HEK293T (cell line): ENCODE measurements at regions of chr5 and their contacts with region 1.

Region 1: GRCh38 chr5:35926389-35927051 is 11.9 kb downstream of the CAPSL start:
- DNase-seq: peak; percentile 71

Region 2: DNA sequence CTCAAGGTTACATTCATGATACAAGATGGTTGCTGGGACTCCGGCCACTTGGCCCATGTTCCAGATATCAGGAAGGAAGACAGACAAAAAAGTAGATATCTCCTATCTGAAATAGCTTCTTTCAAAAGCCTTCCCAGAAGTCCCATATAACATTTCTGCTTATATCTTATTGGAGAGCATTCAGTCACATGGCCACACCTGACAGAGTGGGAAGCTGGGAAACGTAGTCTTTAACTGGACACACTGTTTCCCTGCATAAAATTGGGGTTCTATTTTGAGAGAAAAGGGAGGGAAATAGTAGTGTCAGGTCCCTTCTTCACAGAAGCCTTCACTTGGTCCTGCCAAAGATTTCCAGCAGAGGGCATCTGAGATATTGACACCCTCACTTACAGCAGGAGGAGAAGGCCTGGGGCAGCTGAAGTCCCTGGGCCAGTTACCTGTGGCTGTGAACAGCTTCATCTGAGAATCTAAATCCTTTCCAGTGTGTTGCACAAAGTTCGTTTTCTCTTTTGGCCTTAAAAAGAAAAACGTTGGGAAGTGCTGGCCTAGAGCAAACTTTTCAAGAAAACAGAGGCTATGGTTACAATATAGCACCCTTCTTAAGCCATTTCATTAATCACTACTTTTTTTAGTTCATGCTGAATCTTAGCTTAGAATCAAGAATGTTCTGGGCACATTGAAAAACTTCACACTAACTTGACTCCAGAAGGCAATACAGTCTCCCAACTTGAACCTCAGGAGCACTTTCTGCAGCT is 275.3 kb before region 1 on chr5:
- CTCF ChIA-PET with region 1: interaction called, 13 read pairs
- POLR2A ChIA-PET with region 1: no interaction called
- DNase-seq: peak; percentile 37